ENCODE measurements at regions of chr4 and their contacts with region 1.

Region 1: GRCh38 chr4:1899149-1900086 is 28.2 kb downstream of the NSD2 start:
- DNase-seq: peak; percentile 81
- H3K4me3 ChIP-seq: no peak overlapping the region
- H3K27ac ChIP-seq: no peak overlapping the region
- H3K4me1 ChIP-seq: no peaks in the 10 kb centered on the region
- H3K27me3 ChIP-seq: no peaks in the 10 kb centered on the region
- CTCF ChIP-seq: peak; percentile 85

Region 2: GRCh38 chr4:1266881-1267763 is 632.3 kb before region 1 on chr4:
- CTCF ChIA-PET with region 1: no interaction called
- POLR2A ChIA-PET with region 1: no interaction called
- intact Hi-C with region 1: no loop called
- DNase-seq: no peak
- H3K4me3 ChIP-seq: no peak overlapping the region
- H3K27ac ChIP-seq: no peak overlapping the region
- H3K4me1 ChIP-seq: no peaks in the 10 kb centered on the region
- H3K27me3 ChIP-seq: no peaks in the 10 kb centered on the region
- CTCF ChIP-seq: no peak

Region 3: GRCh38 chr4:1809754-1810511 is 89.5 kb before region 1 on chr4:
- CTCF ChIA-PET with region 1: no interaction called
- POLR2A ChIA-PET with region 1: no interaction called
- intact Hi-C with region 1: loop called (anchors 5 kb)
- DNase-seq: peak; percentile 81
- H3K4me3 ChIP-seq: no peak overlapping the region
- H3K27ac ChIP-seq: no peak overlapping the region
- H3K4me1 ChIP-seq: no peaks in the 10 kb centered on the region
- H3K27me3 ChIP-seq: no peaks in the 10 kb centered on the region
- CTCF ChIP-seq: peak; percentile 95

Region 4: GRCh38 chr4:1883583-1883982 is 15.8 kb before region 1 on chr4:
- CTCF ChIA-PET with region 1: no interaction called
- POLR2A ChIA-PET with region 1: interaction called, 21 read pairs
- intact Hi-C with region 1: no loop called
- DNase-seq: no peak
- H3K4me3 ChIP-seq: no peak overlapping the region
- H3K27ac ChIP-seq: no peak overlapping the region
- H3K4me1 ChIP-seq: no peaks in the 10 kb centered on the region
- H3K27me3 ChIP-seq: no peaks in the 10 kb centered on the region
- CTCF ChIP-seq: no peak

Region 5: GRCh38 chr4:1981251-1982058 is 82.0 kb after region 1 on chr4:
- CTCF ChIA-PET with region 1: no interaction called
- POLR2A ChIA-PET with region 1: no interaction called
- intact Hi-C with region 1: no loop called
- DNase-seq: peak; percentile 60
- H3K4me3 ChIP-seq: no peak overlapping the region
- H3K27ac ChIP-seq: peak overlapping the region; percentile 37
- H3K4me1 ChIP-seq: peaks cover 7% of the 10 kb centered on the region
- H3K27me3 ChIP-seq: no peaks in the 10 kb centered on the region
- CTCF ChIP-seq: no peak